PC-3 (cell line): ENCODE measurements at regions of chr12 and their contacts with region 1.

Region 1: GRCh38 chr12:89775063-89775985 is 66.7 kb upstream of the ATP2B1 start:
- DNase-seq: peak; percentile 91
- ATAC-seq: peak; percentile 48
- H3K4me3 ChIP-seq: no peak overlapping the region
- H3K27ac ChIP-seq: peak overlapping the region; percentile 38
- H3K4me1 ChIP-seq: peaks cover 59% of the 10 kb centered on the region
- H3K27me3 ChIP-seq: no peaks in the 10 kb centered on the region
- CTCF ChIP-seq: no peak

Region 2: GRCh38 chr12:88383405-88383804 is 1391.9 kb before region 1 on chr12:
- CTCF ChIA-PET with region 1: no interaction called
- POLR2A ChIA-PET with region 1: no interaction called
- intact Hi-C with region 1: no loop called
- DNase-seq: no peak
- ATAC-seq: no peak
- H3K4me3 ChIP-seq: no peak overlapping the region
- H3K27ac ChIP-seq: no peak overlapping the region
- H3K4me1 ChIP-seq: no peaks in the 10 kb centered on the region
- H3K27me3 ChIP-seq: no peaks in the 10 kb centered on the region
- CTCF ChIP-seq: no peak

Region 3: GRCh38 chr12:89636052-89636775 is 139.1 kb before region 1 on chr12:
- CTCF ChIA-PET with region 1: no interaction called
- POLR2A ChIA-PET with region 1: no interaction called
- intact Hi-C with region 1: loop called (anchors 2 kb)
- DNase-seq: peak; percentile 77
- ATAC-seq: peak; percentile 68
- H3K4me3 ChIP-seq: peak overlapping the region; percentile 2; the same call in 1 of the 2 replicates
- H3K27ac ChIP-seq: peak overlapping the region; percentile 72
- H3K4me1 ChIP-seq: peaks cover 49% of the 10 kb centered on the region
- H3K27me3 ChIP-seq: no peaks in the 10 kb centered on the region
- CTCF ChIP-seq: no peak

Region 4: DNA sequence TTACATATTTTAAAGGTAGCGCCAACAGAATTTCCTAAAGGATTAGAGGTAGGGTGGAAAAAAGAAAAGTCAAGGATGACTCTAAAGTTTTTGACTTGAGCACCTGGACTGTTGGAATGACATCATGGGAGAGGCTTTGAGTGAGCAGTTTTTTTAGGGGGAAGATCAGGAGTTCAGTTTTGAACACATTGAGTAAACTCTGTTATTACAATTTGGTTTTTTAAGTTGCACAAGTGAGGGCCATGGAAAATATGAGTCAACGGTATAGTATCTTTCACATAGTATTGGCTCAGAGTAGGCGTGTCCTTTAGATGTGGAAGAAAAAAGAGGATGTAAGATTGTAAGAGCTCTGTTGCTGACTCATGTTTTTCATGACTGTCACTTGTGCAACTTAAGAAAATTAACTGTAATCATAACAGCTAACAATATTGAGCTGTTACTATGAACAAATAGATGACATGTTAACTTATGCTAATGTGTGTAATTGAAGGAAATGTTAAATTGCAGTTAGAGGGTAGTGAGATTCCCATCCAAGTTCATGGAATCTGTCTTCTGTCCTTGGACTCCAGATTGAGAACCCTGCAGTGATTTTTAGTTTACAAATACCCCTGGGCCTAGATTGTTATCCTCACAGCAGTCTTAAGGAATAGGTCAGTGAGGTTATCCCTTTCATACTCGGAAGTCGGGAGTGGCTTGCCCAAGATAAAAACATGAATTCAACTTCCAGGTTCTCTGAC is 18.6 kb before region 1 on chr12:
- CTCF ChIA-PET with region 1: no interaction called
- POLR2A ChIA-PET with region 1: interaction called, 5 read pairs
- intact Hi-C with region 1: loop called (anchors 2 kb)
- DNase-seq: peak; percentile 98
- ATAC-seq: peak; percentile 88
- H3K4me3 ChIP-seq: no peak overlapping the region; the same call in 1 of the 2 replicates
- H3K27ac ChIP-seq: peak overlapping the region; percentile 94
- H3K4me1 ChIP-seq: peaks cover 42% of the 10 kb centered on the region
- H3K27me3 ChIP-seq: no peaks in the 10 kb centered on the region
- CTCF ChIP-seq: no peak

Region 5: GRCh38 chr12:89840162-89840922 is 65.0 kb after region 1 on chr12:
- CTCF ChIA-PET with region 1: no interaction called
- POLR2A ChIA-PET with region 1: no interaction called
- intact Hi-C with region 1: no loop called
- DNase-seq: no peak
- ATAC-seq: no peak
- H3K4me3 ChIP-seq: no peak overlapping the region
- H3K27ac ChIP-seq: no peak overlapping the region
- H3K4me1 ChIP-seq: no peaks in the 10 kb centered on the region
- H3K27me3 ChIP-seq: no peaks in the 10 kb centered on the region
- CTCF ChIP-seq: no peak

Region 6: DNA sequence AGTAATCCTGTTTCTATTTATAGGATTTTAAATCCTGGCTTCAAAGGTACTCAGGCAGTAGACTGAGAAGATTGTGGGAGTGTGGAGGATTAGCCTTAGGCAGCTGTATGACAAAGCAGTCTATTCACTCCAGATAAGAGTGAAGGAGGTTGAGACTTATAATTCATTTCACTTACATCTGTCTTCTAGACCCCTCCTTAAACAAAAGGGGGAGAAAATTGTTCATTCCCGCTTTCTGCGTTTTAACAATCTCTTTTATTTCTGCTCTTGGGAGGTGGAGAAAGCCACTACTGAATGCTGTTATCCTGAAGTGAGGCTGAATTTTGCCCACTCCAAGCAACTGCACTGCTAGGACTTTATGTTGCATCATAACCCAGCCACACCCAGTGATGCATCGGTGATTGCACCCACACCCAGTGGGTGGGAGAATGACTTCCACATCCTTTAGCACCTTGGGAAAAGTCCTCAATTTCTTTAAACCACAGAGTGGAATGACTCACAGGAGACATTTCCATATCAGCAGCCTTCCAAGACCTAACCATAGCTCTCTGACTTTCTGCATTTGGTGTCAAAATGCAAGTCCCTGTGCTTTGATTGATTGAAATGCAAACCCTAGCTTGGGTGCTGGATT is 315.8 kb after region 1 on chr12:
- CTCF ChIA-PET with region 1: no interaction called
- POLR2A ChIA-PET with region 1: no interaction called
- intact Hi-C with region 1: loop called (anchors 5 kb)
- DNase-seq: peak; percentile 98
- ATAC-seq: peak; percentile 95
- H3K4me3 ChIP-seq: peak overlapping the region; percentile 41; the same call in 1 of the 2 replicates
- H3K27ac ChIP-seq: peak overlapping the region; percentile 98
- H3K4me1 ChIP-seq: peaks cover 23% of the 10 kb centered on the region
- H3K27me3 ChIP-seq: no peaks in the 10 kb centered on the region
- CTCF ChIP-seq: no peak